H1 (cell line): ENCODE measurements at regions of chr14 and their contacts with region 1.

Region 1: DNA sequence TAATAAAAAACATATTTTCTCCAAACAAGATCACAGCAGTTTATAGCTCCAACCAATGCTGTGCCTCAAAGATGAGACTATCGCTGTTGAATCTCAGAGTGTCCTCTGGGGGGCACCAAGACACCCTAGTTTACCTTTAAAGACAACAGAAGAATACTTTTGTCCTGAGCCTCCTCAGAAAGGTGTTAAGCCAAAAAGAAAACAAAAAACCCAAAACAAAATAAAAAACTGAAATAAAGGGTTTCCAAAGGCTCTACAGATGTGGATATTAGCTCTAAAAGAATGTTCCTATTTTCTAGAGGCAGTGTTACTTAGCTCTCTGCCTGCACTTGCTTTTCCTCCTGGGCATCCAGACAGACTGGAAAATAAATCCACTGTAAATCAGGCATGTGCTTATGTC is 86.9 kb upstream of the TTC7B start:
- DNase-seq: no peak
- H3K4me3 ChIP-seq: no peak overlapping the region
- H3K27ac ChIP-seq: no peak overlapping the region
- H3K4me1 ChIP-seq: no peaks in the 10 kb centered on the region
- H3K27me3 ChIP-seq: no peaks in the 10 kb centered on the region
- CTCF ChIP-seq: peak in 2 of 3 experiments; percentile 65 to 69; a peak in 3 of 4 replicates
- EP300 ChIP-seq: no peak
- POLR2A ChIP-seq: no peak
- RAD21 ChIP-seq: peak; percentile 85 to 89

Region 2: GRCh38 chr14:90522571-90523191 is 380.4 kb before region 1 on chr14:
- CTCF ChIA-PET with region 1: no interaction called
- POLR2A ChIA-PET with region 1: no interaction called
- DNase-seq: no peak
- H3K4me3 ChIP-seq: no peak overlapping the region
- H3K27ac ChIP-seq: no peak overlapping the region
- H3K4me1 ChIP-seq: peaks cover 0 to 9% (median 5%) of the 10 kb centered on the region in 4 experiments; a peak in 6 of 7 replicates
- H3K27me3 ChIP-seq: no peaks in the 10 kb centered on the region
- CTCF ChIP-seq: no peak
- EP300 ChIP-seq: no peak
- POLR2A ChIP-seq: no peak
- RAD21 ChIP-seq: no peak

Region 3: DNA sequence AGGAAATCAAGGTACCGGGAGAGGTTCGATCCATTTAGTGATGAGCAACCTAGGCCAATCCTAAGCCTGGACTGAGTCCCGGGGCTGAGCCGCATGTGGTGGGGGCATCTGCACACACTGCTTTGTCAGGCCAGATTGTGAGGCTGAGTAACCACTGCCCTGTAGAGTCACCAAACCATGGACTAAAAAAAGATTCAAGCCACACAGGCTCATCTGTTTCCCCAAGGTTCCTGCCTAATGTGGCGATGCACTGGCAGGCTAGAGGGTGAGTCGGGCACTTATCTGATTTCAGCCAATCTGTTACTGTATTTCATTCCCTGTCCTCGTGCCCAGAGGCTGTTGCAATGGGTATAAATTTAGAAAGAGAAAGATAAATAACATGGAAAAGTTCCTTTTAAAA is 227.7 kb before region 1 on chr14:
- CTCF ChIA-PET with region 1: no interaction called
- POLR2A ChIA-PET with region 1: no interaction called
- DNase-seq: no peak
- H3K4me3 ChIP-seq: no peak overlapping the region
- H3K27ac ChIP-seq: no peak overlapping the region
- H3K4me1 ChIP-seq: no peaks in the 10 kb centered on the region
- H3K27me3 ChIP-seq: no peaks in the 10 kb centered on the region
- CTCF ChIP-seq: no peak
- EP300 ChIP-seq: no peak
- POLR2A ChIP-seq: no peak
- RAD21 ChIP-seq: no peak

Region 4: DNA sequence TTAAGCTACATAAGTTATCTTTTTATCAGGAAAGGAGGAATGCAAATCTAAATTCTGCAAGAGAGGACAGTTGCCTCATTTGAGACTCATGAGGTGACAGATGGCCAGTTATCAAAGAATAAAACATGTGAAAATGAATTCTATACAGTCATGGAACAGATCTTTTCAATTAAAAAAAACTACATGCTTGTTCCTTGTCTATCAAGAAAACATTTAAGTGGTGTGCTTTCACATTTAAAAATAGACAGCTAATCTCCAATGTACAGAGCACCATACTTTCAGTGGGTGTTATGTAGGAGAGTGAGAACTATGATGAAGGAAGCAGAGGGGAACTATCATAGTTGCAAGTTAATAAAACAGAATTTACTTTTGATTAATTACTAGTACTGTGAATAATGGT is 10.1 kb before region 1 on chr14:
- CTCF ChIA-PET with region 1: interaction called, 28 read pairs
- POLR2A ChIA-PET with region 1: no interaction called
- DNase-seq: no peak
- H3K4me3 ChIP-seq: no peak overlapping the region
- H3K27ac ChIP-seq: no peak overlapping the region
- H3K4me1 ChIP-seq: no peaks in the 10 kb centered on the region
- H3K27me3 ChIP-seq: no peaks in the 10 kb centered on the region
- CTCF ChIP-seq: no peak
- EP300 ChIP-seq: no peak
- POLR2A ChIP-seq: no peak
- RAD21 ChIP-seq: no peak

Region 5: DNA sequence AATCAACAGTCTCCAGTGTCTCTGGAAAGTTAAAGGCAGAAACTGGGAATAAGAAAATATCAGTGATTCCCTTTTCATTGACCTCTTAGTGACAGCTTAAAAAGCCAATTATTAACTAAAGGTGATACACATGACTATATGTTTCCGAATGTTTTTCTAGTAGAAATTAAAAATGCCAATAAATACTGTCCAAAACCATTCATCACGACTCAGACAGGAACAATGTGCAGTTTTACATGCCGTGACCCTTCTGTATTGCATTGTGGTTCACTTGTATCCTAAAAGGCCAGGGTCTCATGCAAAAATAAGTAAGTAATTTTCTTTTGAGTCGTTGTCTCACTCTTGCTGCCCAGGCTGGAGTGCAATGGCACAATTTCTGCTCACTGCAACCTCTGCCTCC is 19.0 kb after region 1 on chr14:
- CTCF ChIA-PET with region 1: interaction called, 10 read pairs
- POLR2A ChIA-PET with region 1: no interaction called
- DNase-seq: no peak
- H3K4me3 ChIP-seq: no peak overlapping the region
- H3K27ac ChIP-seq: no peak overlapping the region
- H3K4me1 ChIP-seq: no peaks in the 10 kb centered on the region
- H3K27me3 ChIP-seq: no peaks in the 10 kb centered on the region
- CTCF ChIP-seq: no peak
- EP300 ChIP-seq: no peak
- POLR2A ChIP-seq: no peak
- RAD21 ChIP-seq: no peak